Heart right ventricle (tissue), 16 donors: ENCODE measurements at regions of chrX and their contacts with region 1.

Region 1: DNA sequence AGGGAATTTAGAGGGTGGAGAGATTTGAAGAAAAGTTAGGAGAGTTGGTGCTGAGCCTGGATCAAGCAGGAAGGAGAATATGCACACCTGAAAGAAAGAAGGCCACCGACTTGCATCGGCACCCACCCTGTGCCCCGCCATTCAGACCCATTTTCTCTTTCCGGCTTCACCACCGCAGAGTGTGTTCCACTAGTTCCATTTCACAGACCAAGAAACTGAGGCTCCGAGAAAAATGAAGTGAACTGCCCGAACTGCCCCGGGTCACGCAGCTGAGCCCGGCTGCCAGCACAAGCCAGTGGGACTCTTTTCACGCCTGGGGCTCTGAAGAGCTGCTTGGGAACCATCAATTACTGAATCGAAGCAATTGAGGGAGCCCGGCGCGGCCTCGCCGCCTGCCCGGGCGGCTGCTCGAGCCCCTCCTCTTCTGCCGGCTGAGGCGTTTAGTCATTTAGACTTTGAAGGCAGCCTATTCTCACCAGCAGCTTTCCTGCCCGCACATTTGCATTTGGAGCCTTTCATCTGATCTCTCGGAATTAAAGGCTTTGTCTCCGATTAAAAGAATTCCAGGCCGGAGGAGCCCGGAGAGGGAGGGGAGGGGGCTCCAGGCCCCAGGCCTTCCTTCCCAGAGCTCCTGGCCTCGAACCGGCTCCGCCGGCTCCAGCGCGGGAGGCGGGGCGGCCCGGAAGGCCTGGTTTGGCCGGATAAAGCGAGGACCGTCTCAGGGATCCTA is 140.2 kb upstream of the PJA1 start:
- DNase-seq: no peak
- ATAC-seq: no peak
- H3K4me3 ChIP-seq: no peak overlapping the region
- H3K27ac ChIP-seq: no peak overlapping the region
- H3K4me1 ChIP-seq: no peaks in the 10 kb centered on the region
- H3K27me3 ChIP-seq: peaks cover 0 to 39% (median 0%) of the 10 kb centered on the region in 7 donors
- CTCF ChIP-seq: no peak

Region 2: GRCh38 chrX:69362856-69363255 is 57.4 kb after region 1 on chrX:
- intact Hi-C with region 1: loop called in 1 of 10 experiments (anchors 10 kb)
- DNase-seq: peak in 1 of 2 donors; percentile 8
- ATAC-seq: peak in 7 of 8 donors; percentile 29 to 60 (median 51)
- H3K4me3 ChIP-seq: no peak overlapping the region
- H3K27ac ChIP-seq: no peak overlapping the region
- H3K4me1 ChIP-seq: peaks cover 0 to 7% (median 0%) of the 10 kb centered on the region in 9 donors
- H3K27me3 ChIP-seq: peaks cover 0 to 7% (median 0%) of the 10 kb centered on the region in 7 donors
- CTCF ChIP-seq: no peak

Region 3: GRCh38 chrX:69603566-69604194 is 298.2 kb after region 1 on chrX:
- intact Hi-C with region 1: no loop called
- DNase-seq: no peak
- ATAC-seq: peak in 1 of 8 donors; percentile 15
- H3K4me3 ChIP-seq: no peak overlapping the region
- H3K27ac ChIP-seq: no peak overlapping the region
- H3K4me1 ChIP-seq: no peaks in the 10 kb centered on the region
- H3K27me3 ChIP-seq: peaks cover 0 to 55% (median 0%) of the 10 kb centered on the region in 7 donors
- CTCF ChIP-seq: no peak